Natural killer cell (primary cell): ENCODE measurements at regions of chr6 and their contacts with region 1.

Region 1: DNA sequence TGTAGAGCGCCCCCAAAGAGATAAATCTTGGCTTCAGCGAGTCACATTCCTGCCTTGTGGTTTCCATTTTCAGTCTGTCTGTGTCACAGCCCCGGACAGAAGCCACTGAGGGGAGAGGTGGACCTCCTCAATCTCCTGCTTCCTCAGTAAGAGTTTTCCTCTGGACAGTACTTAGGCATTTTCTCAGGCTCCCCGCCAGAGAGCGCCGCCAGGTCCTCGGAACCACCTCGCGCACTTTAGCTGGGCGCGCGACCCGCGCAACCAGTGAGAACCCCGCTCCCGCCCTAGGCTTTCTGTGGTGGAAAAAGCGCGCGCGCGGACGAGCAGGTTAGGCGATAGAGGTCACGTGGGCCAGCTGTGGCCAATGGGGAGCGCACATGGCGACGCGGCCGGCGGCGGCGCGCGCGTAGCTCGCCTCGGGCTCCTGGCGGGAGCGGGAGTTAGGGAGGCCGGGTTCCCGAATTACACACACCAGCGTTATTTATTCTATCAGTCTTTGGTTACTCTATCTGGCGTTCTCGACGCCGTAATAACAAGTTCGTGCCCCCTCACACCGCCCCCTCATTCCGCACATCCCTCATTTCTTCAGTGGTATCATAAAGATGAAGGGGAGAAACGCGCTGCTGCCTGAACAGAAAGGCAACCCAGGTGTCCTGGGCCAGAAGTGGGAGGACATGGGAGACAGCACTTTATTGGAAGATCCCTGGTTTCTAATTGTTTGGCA is 19.4 kb downstream of the PXT1 start:
- DNase-seq: peak; percentile 98 to 99
- ATAC-seq: peak; percentile 96 to 99 (median 98)
- H3K4me3 ChIP-seq: peak overlapping the region; percentile 86
- H3K4me3 Mint-ChIP-seq: peak overlapping the region; percentile 91
- H3K27ac ChIP-seq: peak overlapping the region; percentile 82
- H3K27ac Mint-ChIP-seq: peak overlapping the region; percentile 91 to 92
- H3K4me1 ChIP-seq: peaks cover 11% of the 10 kb centered on the region
- H3K4me1 Mint-ChIP-seq: peaks cover 15 to 17% of the 10 kb centered on the region in 2 donors
- H3K27me3 ChIP-seq: no peaks in the 10 kb centered on the region
- H3K27me3 Mint-ChIP-seq: no peaks in the 10 kb centered on the region
- CTCF ChIP-seq: peak; percentile 83

Region 2: GRCh38 chr6:36442671-36443470 is 19.6 kb after region 1 on chr6 and contains the starts of genes KCTD20 and PXT1:
- intact Hi-C with region 1: loop called (anchors 1 kb)
- DNase-seq: peak; percentile 87 to 92
- ATAC-seq: peak; percentile 80 to 94 (median 88)
- H3K4me3 ChIP-seq: peak within 1 kb of the TSS; percentile 91
- H3K4me3 Mint-ChIP-seq: peak within 1 kb of the TSS; percentile 97
- H3K27ac ChIP-seq: peak within 1 kb of the TSS; percentile 89
- H3K27ac Mint-ChIP-seq: peak within 1 kb of the TSS; percentile 94 to 95
- H3K4me1 ChIP-seq: peaks cover 25% of the 10 kb centered on the region
- H3K4me1 Mint-ChIP-seq: peaks cover 37 to 45% of the 10 kb centered on the region in 2 donors
- H3K27me3 ChIP-seq: no peaks in the 10 kb centered on the region
- H3K27me3 Mint-ChIP-seq: no peaks in the 10 kb centered on the region
- CTCF ChIP-seq: no peak
- total RNA-seq, gene KCTD20: 37.7 to 43.5 (median 43.2) TPM
- total RNA-seq, gene PXT1: 0.27 to 1.0 (median 0.28) TPM

Region 3: DNA sequence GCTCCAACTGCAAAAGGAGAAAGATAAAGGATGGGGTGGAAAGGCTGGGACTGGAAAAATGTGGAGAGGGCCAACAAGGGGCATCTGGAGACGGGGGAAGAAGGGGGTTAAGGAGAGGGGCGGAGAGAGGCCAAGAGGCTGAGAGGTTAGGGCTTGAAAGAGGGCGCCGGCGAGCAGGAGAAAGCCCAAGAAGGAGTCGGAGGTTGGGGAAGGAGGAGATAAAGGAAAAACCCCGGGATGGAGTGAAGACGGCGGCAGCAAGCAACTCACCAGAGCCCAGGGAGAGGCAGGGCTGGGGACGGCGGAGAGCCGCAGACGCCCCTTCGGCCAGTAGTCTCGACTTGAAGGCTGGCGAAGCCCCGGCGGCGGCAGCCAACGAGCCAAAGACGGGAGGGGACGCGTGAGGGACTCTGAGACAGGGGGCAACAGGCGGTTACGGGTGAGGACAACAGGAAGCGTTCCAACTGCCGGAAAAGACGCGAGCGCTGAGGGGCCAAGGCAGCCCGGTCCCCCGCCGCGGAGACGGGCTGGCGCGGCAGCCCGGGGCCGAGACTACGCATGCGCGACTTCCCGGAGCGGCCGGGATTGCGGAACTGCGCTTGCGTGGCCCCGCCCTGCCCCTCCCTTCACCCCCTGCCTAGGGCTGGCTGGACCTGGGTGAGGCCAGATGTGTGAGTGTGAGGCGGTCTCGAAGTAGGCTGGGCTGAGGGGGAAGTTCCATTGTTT is 123.8 kb after region 1 on chr6 and contains the start of gene STK38:
- intact Hi-C with region 1: loop called (anchors 1 kb)
- DNase-seq: peak; percentile 87 to 96
- ATAC-seq: peak; percentile 84 to 92 (median 87)
- H3K4me3 ChIP-seq: peak within 1 kb of the TSS; percentile 89
- H3K4me3 Mint-ChIP-seq: peak within 1 kb of the TSS; percentile 99
- H3K27ac ChIP-seq: peak within 1 kb of the TSS; percentile 93
- H3K27ac Mint-ChIP-seq: peak within 1 kb of the TSS; percentile 93 to 100
- H3K4me1 ChIP-seq: peaks cover 35% of the 10 kb centered on the region
- H3K4me1 Mint-ChIP-seq: peaks cover 47 to 56% of the 10 kb centered on the region in 2 donors
- H3K27me3 ChIP-seq: no peaks in the 10 kb centered on the region
- H3K27me3 Mint-ChIP-seq: no peaks in the 10 kb centered on the region
- CTCF ChIP-seq: no peak
- total RNA-seq, gene STK38: 105 to 157 (median 126) TPM

Region 4: GRCh38 chr6:36594029-36594815 is 171.0 kb after region 1 on chr6 and contains the start of gene SRSF3:
- intact Hi-C with region 1: loop called (anchors 5 kb)
- DNase-seq: peak; percentile 95 to 99
- ATAC-seq: peak; percentile 80 to 96 (median 87)
- H3K4me3 ChIP-seq: peak within 1 kb of the TSS; percentile 82
- H3K4me3 Mint-ChIP-seq: peak within 1 kb of the TSS; percentile 94
- H3K27ac ChIP-seq: peak within 1 kb of the TSS; percentile 98
- H3K27ac Mint-ChIP-seq: peak within 1 kb of the TSS; percentile 97 to 99
- H3K4me1 ChIP-seq: peaks cover 52% of the 10 kb centered on the region
- H3K4me1 Mint-ChIP-seq: peaks cover 59 to 60% of the 10 kb centered on the region in 2 donors
- H3K27me3 ChIP-seq: no peaks in the 10 kb centered on the region
- H3K27me3 Mint-ChIP-seq: peaks cover 0 to 2% of the 10 kb centered on the region in 2 donors
- CTCF ChIP-seq: no peak
- total RNA-seq, gene SRSF3: 445 to 526 (median 447) TPM

Region 5: GRCh38 chr6:36678518-36679027 is 255.3 kb after region 1 on chr6 and contains the start of gene CDKN1A:
- intact Hi-C with region 1: loop called (anchors 1 kb)
- DNase-seq: peak; percentile 72 to 86
- ATAC-seq: peak; percentile 50 to 67 (median 58)
- H3K4me3 ChIP-seq: peak within 1 kb of the TSS; percentile 63
- H3K4me3 Mint-ChIP-seq: peak within 1 kb of the TSS; percentile 97
- H3K27ac ChIP-seq: peak within 1 kb of the TSS; percentile 59
- H3K27ac Mint-ChIP-seq: peak within 1 kb of the TSS; percentile 87 to 96
- H3K4me1 ChIP-seq: peaks cover 45% of the 10 kb centered on the region
- H3K4me1 Mint-ChIP-seq: peaks cover 29 to 30% of the 10 kb centered on the region in 2 donors
- H3K27me3 ChIP-seq: peaks cover 5% of the 10 kb centered on the region
- H3K27me3 Mint-ChIP-seq: peaks cover 0 to 5% of the 10 kb centered on the region in 2 donors
- CTCF ChIP-seq: no peak
- total RNA-seq, gene CDKN1A: 19.1 to 40.7 (median 25.4) TPM

Region 6: DNA sequence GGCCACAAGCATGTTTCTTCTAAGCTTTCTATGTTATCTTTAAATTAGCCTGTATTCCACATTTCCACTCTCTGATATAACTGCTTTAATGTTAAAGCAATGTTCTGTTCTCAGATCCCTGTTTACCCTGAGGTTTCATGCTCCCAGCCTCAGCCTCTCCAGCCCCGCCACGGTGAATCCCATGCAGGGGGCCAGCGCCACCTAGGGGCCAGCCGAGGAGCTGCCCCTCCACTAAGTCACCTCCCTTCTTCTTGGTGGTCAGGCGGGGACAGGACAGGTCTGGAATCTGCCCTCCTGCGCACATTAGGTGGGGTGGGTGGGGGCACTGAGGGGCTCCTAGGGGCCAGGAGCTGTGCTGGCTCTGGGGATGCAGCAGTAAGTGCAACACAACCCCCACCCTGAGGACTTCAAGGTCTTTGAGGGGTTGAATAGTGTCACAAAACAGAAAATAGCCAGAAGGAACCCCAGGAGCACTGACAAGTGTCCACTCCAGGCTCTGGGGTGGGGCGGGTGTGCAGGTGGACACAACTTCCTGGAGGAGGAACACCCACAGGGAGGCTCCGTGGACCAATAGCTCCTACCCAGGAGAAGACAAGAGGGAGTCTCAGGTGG is 336.0 kb after region 1 on chr6:
- intact Hi-C with region 1: loop called (anchors 5 kb)
- DNase-seq: peak; percentile 77 to 87
- ATAC-seq: peak; percentile 55 to 78 (median 60)
- H3K4me3 ChIP-seq: no peak overlapping the region
- H3K4me3 Mint-ChIP-seq: no peak overlapping the region
- H3K27ac ChIP-seq: no peak overlapping the region
- H3K27ac Mint-ChIP-seq: peak overlapping the region in 1 of 2 donors; percentile 68
- H3K4me1 ChIP-seq: peaks cover 47% of the 10 kb centered on the region
- H3K4me1 Mint-ChIP-seq: peaks cover 34 to 41% of the 10 kb centered on the region in 2 donors
- H3K27me3 ChIP-seq: no peaks in the 10 kb centered on the region
- H3K27me3 Mint-ChIP-seq: peaks cover 0 to 6% of the 10 kb centered on the region in 2 donors
- CTCF ChIP-seq: peak; percentile 98